WTC11 (cell line): ENCODE measurements at regions of chr22 and their contacts with region 1.

Region 1: GRCh38 chr22:23270212-23270733 is 90.0 kb downstream of the BCR start:
- DNase-seq: no peak
- ATAC-seq: peak; percentile 43
- H3K4me3 Mint-ChIP-seq: no peak overlapping the region
- H3K27ac Mint-ChIP-seq: peak overlapping the region; percentile 90; the same call in 1 of the 2 replicates
- H3K4me1 Mint-ChIP-seq: peaks cover 45% of the 10 kb centered on the region
- H3K27me3 Mint-ChIP-seq: no peaks in the 10 kb centered on the region
- CTCF ChIP-seq: no peak

Region 2: GRCh38 chr22:23152315-23153113 is 117.8 kb before region 1 on chr22:
- CTCF ChIA-PET with region 1: interaction called, 28 read pairs
- POLR2A ChIA-PET with region 1: interaction called, 4 read pairs
- DNase-seq: no peak
- ATAC-seq: no peak
- H3K4me3 Mint-ChIP-seq: no peak overlapping the region
- H3K27ac Mint-ChIP-seq: no peak overlapping the region
- H3K4me1 Mint-ChIP-seq: peaks cover 47% of the 10 kb centered on the region
- H3K27me3 Mint-ChIP-seq: peaks cover 4% of the 10 kb centered on the region
- CTCF ChIP-seq: no peak

Region 3: GRCh38 chr22:23178512-23179254 is 91.6 kb before region 1 on chr22:
- CTCF ChIA-PET with region 1: interaction called, 18 read pairs
- POLR2A ChIA-PET with region 1: no interaction called
- DNase-seq: peak; percentile 84
- ATAC-seq: peak; percentile 57
- H3K4me3 Mint-ChIP-seq: no peak overlapping the region; the same call in 1 of the 2 replicates
- H3K27ac Mint-ChIP-seq: no peak overlapping the region
- H3K4me1 Mint-ChIP-seq: peaks cover 39% of the 10 kb centered on the region
- H3K27me3 Mint-ChIP-seq: no peaks in the 10 kb centered on the region; the same call in none of the 2 replicates
- CTCF ChIP-seq: peak; percentile 88

Region 4: GRCh38 chr22:23240639-23241389 is 29.5 kb before region 1 on chr22:
- CTCF ChIA-PET with region 1: interaction called, 24 read pairs
- POLR2A ChIA-PET with region 1: interaction called, 4 read pairs
- DNase-seq: peak; percentile 62
- ATAC-seq: peak; percentile 6
- H3K4me3 Mint-ChIP-seq: no peak overlapping the region
- H3K27ac Mint-ChIP-seq: peak overlapping the region; percentile 100
- H3K4me1 Mint-ChIP-seq: peaks cover 88% of the 10 kb centered on the region
- H3K27me3 Mint-ChIP-seq: no peaks in the 10 kb centered on the region
- CTCF ChIP-seq: no peak

Region 5: DNA sequence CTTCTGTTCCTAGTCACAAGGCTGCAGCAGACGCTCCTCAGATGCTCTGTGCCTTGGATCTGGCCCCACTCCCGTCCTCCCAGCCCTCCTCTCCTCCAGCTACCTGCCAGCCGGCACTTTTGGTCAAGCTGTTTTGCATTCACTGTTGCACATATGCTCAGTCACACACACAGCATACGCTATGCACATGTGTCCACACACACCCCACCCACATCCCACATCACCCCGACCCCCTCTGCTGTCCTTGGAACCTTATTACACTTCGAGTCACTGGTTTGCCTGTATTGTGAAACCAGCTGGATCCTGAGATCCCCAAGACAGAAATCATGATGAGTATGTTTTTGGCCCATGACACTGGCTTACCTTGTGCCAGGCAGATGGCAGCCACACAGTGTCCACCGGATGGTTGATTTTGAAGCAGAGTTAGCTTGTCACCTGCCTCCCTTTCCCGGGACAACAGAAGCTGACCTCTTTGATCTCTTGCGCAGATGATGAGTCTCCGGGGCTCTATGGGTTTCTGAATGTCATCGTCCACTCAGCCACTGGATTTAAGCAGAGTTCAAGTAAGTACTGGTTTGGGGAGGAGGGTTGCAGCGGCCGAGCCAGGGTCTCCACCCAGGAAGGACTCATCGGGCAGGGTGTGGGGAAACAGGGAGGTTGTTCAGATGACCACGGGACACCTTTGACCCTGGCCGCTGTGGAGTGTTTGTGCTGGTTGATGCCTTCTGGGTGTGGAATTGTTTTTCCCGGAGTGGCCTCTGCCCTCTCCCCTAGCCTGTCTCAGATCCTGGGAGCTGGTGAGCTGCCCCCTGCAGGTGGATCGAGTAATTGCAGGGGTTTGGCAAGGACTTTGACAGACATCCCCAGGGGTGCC is 19.8 kb after region 1 on chr22:
- CTCF ChIA-PET with region 1: interaction called, 10 read pairs
- POLR2A ChIA-PET with region 1: no interaction called
- DNase-seq: peak; percentile 86
- ATAC-seq: peak; percentile 82
- H3K4me3 Mint-ChIP-seq: no peak overlapping the region
- H3K27ac Mint-ChIP-seq: no peak overlapping the region
- H3K4me1 Mint-ChIP-seq: no peaks in the 10 kb centered on the region
- H3K27me3 Mint-ChIP-seq: no peaks in the 10 kb centered on the region
- CTCF ChIP-seq: peak; percentile 83

Region 6: DNA sequence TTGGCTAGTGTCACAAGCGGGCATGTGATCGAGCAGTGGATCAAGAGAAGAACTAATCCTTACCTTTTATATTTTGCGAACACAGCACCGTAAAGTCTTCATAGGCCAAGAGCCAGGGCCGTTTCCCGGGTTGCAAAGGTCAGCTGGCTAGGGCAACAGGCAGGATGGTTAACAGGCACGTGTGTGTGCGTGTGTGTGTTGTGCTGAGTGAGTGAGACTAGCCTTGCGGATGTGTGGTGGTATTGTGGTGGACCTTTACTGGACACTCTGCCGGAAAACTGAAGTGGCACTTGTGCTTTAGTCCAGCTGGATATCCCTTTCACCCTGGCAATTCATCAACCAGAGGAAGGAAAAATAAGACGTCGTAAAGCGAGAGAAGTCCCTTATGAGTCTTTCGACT is 86.8 kb after region 1 on chr22:
- CTCF ChIA-PET with region 1: no interaction called
- POLR2A ChIA-PET with region 1: no interaction called
- DNase-seq: no peak
- ATAC-seq: no peak
- H3K4me3 Mint-ChIP-seq: no peak overlapping the region
- H3K27ac Mint-ChIP-seq: no peak overlapping the region
- H3K4me1 Mint-ChIP-seq: no peaks in the 10 kb centered on the region
- H3K27me3 Mint-ChIP-seq: peaks cover 95% of the 10 kb centered on the region
- CTCF ChIP-seq: no peak